ENCODE measurements at regions of chr6 and their contacts with region 1.

Region 1: GRCh38 chr6:1604158-1605030 is 5.3 kb upstream of the FOXC1 start:
- DNase-seq: peak; percentile 88

Region 2: DNA sequence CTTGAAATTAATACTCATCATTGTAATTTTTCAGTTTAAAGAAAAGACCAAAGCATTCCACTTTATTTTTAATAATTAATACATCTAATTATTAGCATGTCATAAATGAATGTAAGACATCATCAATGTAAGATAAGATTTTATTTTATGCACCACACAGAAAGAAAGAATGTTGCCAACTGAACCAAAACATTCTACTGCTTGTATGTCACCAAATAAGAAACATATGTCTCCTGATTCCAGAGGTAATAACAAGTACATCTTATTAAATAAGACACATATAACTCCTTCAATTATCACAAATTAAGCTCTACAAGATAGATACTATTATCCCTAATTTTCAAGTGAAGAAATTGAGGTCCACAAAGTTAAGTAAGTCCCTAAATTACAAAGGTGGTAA is 451.5 kb after region 1 on chr6:
- intact Hi-C with region 1: no loop called
- DNase-seq: no peak

Region 3: DNA sequence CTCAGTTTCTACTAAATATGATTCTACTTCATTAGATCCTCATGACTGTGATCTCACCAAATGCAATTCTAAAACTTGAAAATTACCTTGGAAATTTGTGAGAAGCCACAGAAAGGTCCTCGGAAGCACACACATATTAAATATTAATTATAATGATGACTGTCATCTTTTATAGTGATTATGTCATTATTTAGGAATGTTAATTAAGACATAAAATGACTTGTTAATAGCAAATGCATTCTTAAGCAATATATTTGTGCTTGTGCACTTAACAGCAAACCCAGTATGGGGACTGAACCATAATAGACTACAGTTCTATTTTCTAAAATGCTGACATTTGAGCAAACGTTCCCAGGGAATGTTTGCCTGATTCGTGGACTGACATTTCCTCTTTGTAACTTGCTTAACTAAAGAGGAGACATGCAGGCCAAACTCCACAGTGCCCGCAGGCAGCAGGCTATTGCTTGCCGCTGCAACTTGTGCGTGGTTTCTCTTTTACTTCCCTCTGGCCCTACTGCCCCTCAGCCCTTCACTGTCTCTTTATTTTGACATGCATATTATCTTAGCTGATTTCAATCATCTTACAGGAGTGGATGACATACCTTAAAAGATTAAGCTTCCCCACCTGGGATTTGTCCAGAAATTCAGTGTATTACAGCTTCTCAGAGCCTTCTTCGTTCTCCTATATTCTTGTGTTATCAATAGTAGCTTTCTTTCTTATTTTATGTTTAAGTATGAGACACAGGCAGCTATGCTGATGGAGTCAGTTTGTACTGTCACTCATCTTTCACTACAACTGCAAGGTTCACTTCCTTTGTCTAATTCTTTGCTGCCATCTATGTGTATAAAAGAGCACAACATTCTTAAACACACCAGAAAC is 499.5 kb after region 1 on chr6:
- intact Hi-C with region 1: loop called (anchors 2 kb)
- DNase-seq: no peak

Region 4: GRCh38 chr6:2196079-2196679 is 591.8 kb after region 1 on chr6:
- intact Hi-C with region 1: loop called (anchors 5 kb)
- DNase-seq: no peak

Region 5: DNA sequence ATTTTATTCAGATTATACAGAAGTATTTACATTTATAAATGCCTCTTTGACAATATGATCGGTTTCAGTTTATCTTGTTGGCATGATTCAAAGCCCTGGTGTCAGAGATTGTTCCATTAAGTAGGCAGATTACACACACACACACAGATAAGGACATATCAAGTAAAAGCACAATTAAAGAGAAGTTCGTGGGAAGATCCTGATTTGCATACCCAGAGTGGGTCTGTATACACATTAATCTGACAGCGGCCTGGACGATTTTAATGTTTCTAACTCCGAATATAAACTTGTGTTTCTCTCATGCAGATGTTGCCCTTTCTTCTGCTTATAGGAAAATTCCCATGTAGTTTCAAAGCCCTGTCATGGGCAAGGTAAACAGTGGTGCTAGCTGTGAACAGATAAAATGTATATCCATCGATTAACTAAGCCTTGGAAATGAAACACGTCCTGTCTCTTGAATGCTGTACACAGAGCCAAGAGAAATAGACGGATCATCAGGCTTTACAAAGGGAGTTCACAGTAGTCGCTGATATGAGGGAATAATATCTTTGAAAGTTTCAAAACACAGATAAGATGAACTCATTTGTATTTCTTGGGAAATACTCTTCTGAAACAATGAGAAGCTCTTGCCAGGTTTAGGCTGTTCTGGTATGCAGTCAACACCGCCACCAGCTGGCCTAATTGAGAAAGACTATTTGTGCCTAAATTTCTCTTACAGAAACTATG is 749.2 kb after region 1 on chr6:
- intact Hi-C with region 1: loop called (anchors 5 kb)
- DNase-seq: peak; percentile 80

Measured in cardiac septum (tissue), 1 donor.